IMR-90 (cell line): ENCODE measurements at regions of chr7 and their contacts with region 1.

Region 1: DNA sequence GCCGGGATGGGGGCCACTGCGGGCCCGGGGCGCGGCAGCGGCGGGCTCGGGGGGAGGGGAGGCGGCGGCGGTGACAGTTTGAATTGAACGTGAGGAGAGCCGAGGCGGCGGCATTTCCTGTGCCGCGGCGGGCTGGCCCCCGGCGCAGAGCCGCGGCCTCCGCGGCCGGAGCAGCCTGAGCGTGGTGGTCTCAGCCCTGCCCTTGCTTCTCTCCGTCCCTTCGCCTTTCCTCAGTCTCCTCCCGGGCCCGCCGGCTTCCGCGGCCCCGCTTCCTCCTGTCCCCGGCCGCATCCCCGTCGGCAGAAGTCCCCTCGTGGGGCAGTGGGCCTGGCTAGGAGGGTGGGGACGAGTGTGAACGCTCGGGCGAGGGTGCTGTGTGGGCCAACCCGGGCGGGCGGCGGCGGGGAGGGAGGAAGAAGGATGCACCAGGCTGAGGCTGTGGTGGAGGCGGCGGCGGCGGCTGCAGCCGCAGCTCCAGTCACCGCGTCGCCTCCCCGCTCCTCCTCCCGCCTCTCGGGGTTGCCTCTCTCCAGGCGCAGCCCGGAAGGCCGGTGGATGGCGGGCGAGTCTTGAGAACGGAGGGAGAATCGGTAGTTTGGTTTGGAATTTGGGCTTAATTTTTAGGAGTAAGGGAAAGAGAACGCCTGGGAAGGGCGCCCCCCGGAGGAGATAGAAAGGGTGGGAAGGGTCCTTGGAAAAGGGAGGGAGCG is 690 bp downstream of the SEPTIN7 start:
- DNase-seq: peak; percentile 65
- ATAC-seq: peak; percentile 24
- H3K4me3 ChIP-seq: peak overlapping the region; percentile 92
- H3K27ac ChIP-seq: peak overlapping the region; percentile 97
- H3K4me1 ChIP-seq: peaks cover 2% of the 10 kb centered on the region; the same call in 1 of the 2 replicates
- H3K27me3 ChIP-seq: no peaks in the 10 kb centered on the region
- CTCF ChIP-seq: peak; percentile 62
- POLR2A ChIP-seq: no peak
- RAD21 ChIP-seq: peak; percentile 44; the same call in 1 of the 2 replicates

Region 2: GRCh38 chr7:35424869-35425495 is 376.6 kb before region 1 on chr7:
- CTCF ChIA-PET with region 1: no interaction called
- POLR2A ChIA-PET with region 1: no interaction called
- dilution Hi-C with region 1: no loop called
- in situ Hi-C with region 1: no loop called
- intact Hi-C with region 1: loop called (anchors 5 kb)
- DNase-seq: peak; percentile 43
- ATAC-seq: peak; percentile 89
- H3K4me3 ChIP-seq: no peak overlapping the region
- H3K27ac ChIP-seq: no peak overlapping the region
- H3K4me1 ChIP-seq: no peaks in the 10 kb centered on the region
- H3K27me3 ChIP-seq: no peaks in the 10 kb centered on the region
- CTCF ChIP-seq: peak; percentile 75
- POLR2A ChIP-seq: no peak
- RAD21 ChIP-seq: peak; percentile 57

Region 3: GRCh38 chr7:35707422-35707821 is 94.1 kb before region 1 on chr7:
- CTCF ChIA-PET with region 1: interaction called, 11 read pairs
- POLR2A ChIA-PET with region 1: interaction called, 9 read pairs
- dilution Hi-C with region 1: no loop called
- in situ Hi-C with region 1: no loop called
- intact Hi-C with region 1: loop called (anchors 1 kb)
- DNase-seq: peak; percentile 60
- ATAC-seq: 0 out of 2 replicates have a peak, but pooled peaks have one; percentile 15
- H3K4me3 ChIP-seq: no peak overlapping the region
- H3K27ac ChIP-seq: no peak overlapping the region
- H3K4me1 ChIP-seq: peaks cover 7% of the 10 kb centered on the region
- H3K27me3 ChIP-seq: no peaks in the 10 kb centered on the region
- CTCF ChIP-seq: no peak
- POLR2A ChIP-seq: no peak
- RAD21 ChIP-seq: no peak

Region 4: GRCh38 chr7:35839860-35840854 is 38.6 kb after region 1 on chr7:
- CTCF ChIA-PET with region 1: no interaction called
- POLR2A ChIA-PET with region 1: no interaction called
- dilution Hi-C with region 1: no loop called
- in situ Hi-C with region 1: no loop called
- intact Hi-C with region 1: loop called (anchors 5 kb)
- DNase-seq: peak; percentile 78
- ATAC-seq: peak; percentile 89
- H3K4me3 ChIP-seq: no peak overlapping the region
- H3K27ac ChIP-seq: peak overlapping the region; percentile 70; the same call in 1 of the 2 replicates
- H3K4me1 ChIP-seq: peaks cover 6% of the 10 kb centered on the region
- H3K27me3 ChIP-seq: no peaks in the 10 kb centered on the region
- CTCF ChIP-seq: no peak
- POLR2A ChIP-seq: no peak
- RAD21 ChIP-seq: no peak

Region 5: GRCh38 chr7:35906191-35906908 is 104.8 kb after region 1 on chr7:
- CTCF ChIA-PET with region 1: no interaction called
- POLR2A ChIA-PET with region 1: interaction called, 3 read pairs
- dilution Hi-C with region 1: no loop called
- in situ Hi-C with region 1: no loop called
- intact Hi-C with region 1: loop called (anchors 2 kb)
- DNase-seq: peak; percentile 81
- ATAC-seq: peak; percentile 90
- H3K4me3 ChIP-seq: no peak overlapping the region
- H3K27ac ChIP-seq: no peak overlapping the region
- H3K4me1 ChIP-seq: peaks cover 2% of the 10 kb centered on the region; the same call in 1 of the 2 replicates
- H3K27me3 ChIP-seq: no peaks in the 10 kb centered on the region
- CTCF ChIP-seq: peak; percentile 87
- POLR2A ChIP-seq: peak; percentile 40; the same call in 1 of the 2 replicates
- RAD21 ChIP-seq: peak; percentile 88